GM10248 (cell line): ENCODE measurements at regions of chr5 and their contacts with region 1.

Region 1: GRCh38 chr5:89313804-89314588 is 431.0 kb upstream of the MEF2C start:
- DNase-seq: peak; percentile 64
- CTCF ChIP-seq: no peak

Region 2: DNA sequence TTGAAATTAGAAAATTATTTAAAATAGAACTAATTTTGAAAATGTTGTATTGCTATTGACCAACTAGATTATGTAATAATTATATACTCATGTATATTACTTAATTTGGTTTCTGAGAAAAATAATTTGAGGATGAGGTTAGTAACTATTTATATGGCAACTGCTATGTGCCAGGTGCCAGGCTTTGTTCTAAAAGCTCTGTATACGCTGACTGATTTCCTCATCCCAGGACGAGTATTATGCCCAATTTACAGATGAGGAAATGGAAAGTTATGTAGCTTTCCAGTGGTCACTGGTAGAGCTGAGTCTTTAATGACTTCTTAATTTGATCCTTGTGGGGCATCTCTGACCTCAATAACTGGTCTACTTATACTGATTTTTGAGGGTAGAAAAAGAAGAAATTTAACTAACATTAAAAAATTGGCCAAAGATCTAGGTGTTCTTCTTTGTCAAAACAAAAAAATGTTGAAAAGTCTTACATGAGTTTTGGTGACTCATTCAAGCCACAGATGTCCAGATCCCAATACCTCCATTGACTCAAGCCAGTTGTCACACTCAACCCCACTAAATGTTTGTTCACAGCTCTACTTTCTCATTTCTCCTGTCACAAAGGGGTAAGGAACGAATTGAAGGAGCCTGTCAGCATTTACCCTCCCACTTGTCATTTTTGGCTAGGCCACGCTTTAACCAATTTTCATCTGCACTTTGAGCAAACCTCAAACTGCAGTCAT is 202.9 kb before region 1 on chr5:
- CTCF ChIA-PET with region 1: no interaction called
- POLR2A ChIA-PET with region 1: no interaction called
- DNase-seq: no peak
- CTCF ChIP-seq: no peak

Region 3: GRCh38 chr5:89179731-89180130 is 134.3 kb before region 1 on chr5:
- CTCF ChIA-PET with region 1: no interaction called
- POLR2A ChIA-PET with region 1: no interaction called
- DNase-seq: no peak
- CTCF ChIP-seq: no peak

Region 4: GRCh38 chr5:89241186-89241585 is 72.8 kb before region 1 on chr5:
- CTCF ChIA-PET with region 1: no interaction called
- POLR2A ChIA-PET with region 1: no interaction called
- DNase-seq: no peak
- CTCF ChIP-seq: no peak

Region 5: DNA sequence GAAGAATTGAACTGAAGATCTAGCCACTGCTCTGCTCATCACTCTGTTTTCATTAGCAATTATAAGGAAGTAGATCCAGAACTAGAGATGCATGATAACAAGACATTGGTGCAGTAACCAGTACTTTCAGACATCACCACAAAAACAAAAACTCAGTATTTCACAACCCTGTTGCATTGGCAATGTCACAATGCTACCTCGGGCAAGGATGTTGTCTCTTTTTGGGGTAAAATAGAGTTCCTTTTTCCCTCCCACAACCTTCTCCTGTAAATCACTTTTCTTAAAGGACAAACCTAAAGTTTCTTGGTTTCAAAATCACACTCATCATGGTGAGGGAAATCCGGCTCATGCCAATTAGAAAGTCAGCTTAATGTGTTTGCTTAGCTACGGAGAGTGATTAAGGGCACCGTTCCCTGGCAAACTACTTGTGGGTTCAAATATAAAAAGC is 10.9 kb before region 1 on chr5:
- CTCF ChIA-PET with region 1: interaction called, 25 read pairs
- POLR2A ChIA-PET with region 1: interaction called, 4 read pairs
- DNase-seq: no peak
- CTCF ChIP-seq: no peak

Region 6: GRCh38 chr5:89353837-89354551 is 40.0 kb after region 1 on chr5:
- CTCF ChIA-PET with region 1: interaction called, 14 read pairs
- POLR2A ChIA-PET with region 1: interaction called, 7 read pairs
- DNase-seq: peak; percentile 13
- CTCF ChIP-seq: no peak